Activated CD4-positive, alpha-beta T cell treated with anti-CD3 and anti-CD28 coated beads, Interleukin-2, amount 10 ng/mL, durations not matched to agents 7 days and 5 days (primary cell): ENCODE measurements at regions of chr9 and their contacts with region 1.

Region 1: DNA sequence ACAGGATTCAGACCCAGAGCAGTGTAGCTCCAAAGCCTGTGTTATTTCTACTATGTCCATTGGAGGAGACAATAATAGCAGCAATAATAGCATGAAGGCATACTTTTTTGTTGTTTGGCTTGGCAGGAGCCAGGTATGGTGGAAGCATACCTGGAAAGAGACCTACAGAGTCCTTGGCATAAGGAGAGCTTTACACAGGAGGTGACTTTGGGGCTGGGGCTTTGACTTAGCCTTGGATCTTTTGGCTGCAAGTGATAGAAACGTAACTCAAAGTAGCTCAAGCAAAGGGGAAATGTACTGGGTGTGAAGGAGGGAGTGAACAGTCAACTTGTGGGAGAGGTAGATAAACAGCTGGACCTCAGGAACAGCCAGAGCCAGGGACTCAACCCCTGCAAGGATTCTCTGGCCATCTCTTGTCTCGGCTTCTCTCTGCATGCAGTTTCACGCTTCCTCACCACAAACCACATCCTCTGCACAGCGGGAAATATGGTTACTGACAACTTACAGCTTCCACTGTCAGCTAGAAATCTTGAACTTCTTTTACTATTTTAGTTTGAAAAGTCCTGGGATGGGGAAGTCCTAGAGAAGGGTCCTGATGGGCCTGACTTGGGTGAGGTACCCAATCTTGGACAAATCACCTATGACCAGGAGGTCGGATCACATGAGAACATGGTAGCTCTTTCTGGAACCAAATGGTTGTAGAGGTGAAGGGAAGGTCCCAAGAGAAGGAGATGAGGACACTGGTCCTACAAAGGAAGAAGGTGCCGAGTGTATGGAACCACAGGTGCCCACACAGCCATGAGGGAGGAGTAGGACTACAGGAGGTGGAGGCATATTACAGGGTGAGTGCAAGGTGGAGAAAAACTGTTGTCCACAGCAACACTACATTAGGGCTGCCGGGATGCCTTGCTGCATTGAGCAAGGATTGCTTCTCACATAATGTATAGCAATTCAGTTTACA is 47.0 kb upstream of the TGFBR1 start:
- DNase-seq: peak; percentile 91
- H3K4me3 Mint-ChIP-seq: peak overlapping the region; percentile 75
- H3K27ac Mint-ChIP-seq: peak overlapping the region; percentile 93
- H3K4me1 Mint-ChIP-seq: peaks cover 62% of the 10 kb centered on the region
- H3K27me3 Mint-ChIP-seq: peaks cover 14% of the 10 kb centered on the region

Region 2: GRCh38 chr9:99012942-99013512 is 44.9 kb before region 1 on chr9:
- CTCF ChIA-PET with region 1: interaction called, 12 read pairs
- POLR2A ChIA-PET with region 1: no interaction called
- DNase-seq: no peak
- H3K4me3 Mint-ChIP-seq: no peak overlapping the region
- H3K27ac Mint-ChIP-seq: peak overlapping the region; percentile 93
- H3K4me1 Mint-ChIP-seq: peaks cover 17% of the 10 kb centered on the region
- H3K27me3 Mint-ChIP-seq: no peaks in the 10 kb centered on the region

Region 3: GRCh38 chr9:99069075-99069474 is 11.1 kb after region 1 on chr9:
- CTCF ChIA-PET with region 1: interaction called, 11 read pairs
- POLR2A ChIA-PET with region 1: no interaction called
- DNase-seq: no peak
- H3K4me3 Mint-ChIP-seq: no peak overlapping the region
- H3K27ac Mint-ChIP-seq: peak overlapping the region; percentile 90
- H3K4me1 Mint-ChIP-seq: peaks cover 44% of the 10 kb centered on the region
- H3K27me3 Mint-ChIP-seq: no peaks in the 10 kb centered on the region

Region 4: GRCh38 chr9:99092643-99093491 is 34.9 kb after region 1 on chr9:
- CTCF ChIA-PET with region 1: interaction called, 16 read pairs
- POLR2A ChIA-PET with region 1: no interaction called
- DNase-seq: peak; percentile 64
- H3K4me3 Mint-ChIP-seq: peak overlapping the region; percentile 32
- H3K27ac Mint-ChIP-seq: peak overlapping the region; percentile 95
- H3K4me1 Mint-ChIP-seq: peaks cover 71% of the 10 kb centered on the region
- H3K27me3 Mint-ChIP-seq: no peaks in the 10 kb centered on the region